Activated naive CD8-positive, alpha-beta T cell treated with anti-CD3 and anti-CD28 coated beads, Interleukin-2, amount 10 ng/mL, durations not matched to agents 7 days and 5 days (primary cell): ENCODE measurements at regions of chr4 and their contacts with region 1.

Region 1: GRCh38 chr4:112284662-112285411 is 867 bp downstream of the TIFA start:
- DNase-seq: no peak
- ATAC-seq: no peak
- H3K4me3 Mint-ChIP-seq: peak overlapping the region; percentile 92
- H3K27ac Mint-ChIP-seq: peak overlapping the region; percentile 94
- H3K4me1 Mint-ChIP-seq: peaks cover 57% of the 10 kb centered on the region
- H3K27me3 Mint-ChIP-seq: no peaks in the 10 kb centered on the region

Region 2: DNA sequence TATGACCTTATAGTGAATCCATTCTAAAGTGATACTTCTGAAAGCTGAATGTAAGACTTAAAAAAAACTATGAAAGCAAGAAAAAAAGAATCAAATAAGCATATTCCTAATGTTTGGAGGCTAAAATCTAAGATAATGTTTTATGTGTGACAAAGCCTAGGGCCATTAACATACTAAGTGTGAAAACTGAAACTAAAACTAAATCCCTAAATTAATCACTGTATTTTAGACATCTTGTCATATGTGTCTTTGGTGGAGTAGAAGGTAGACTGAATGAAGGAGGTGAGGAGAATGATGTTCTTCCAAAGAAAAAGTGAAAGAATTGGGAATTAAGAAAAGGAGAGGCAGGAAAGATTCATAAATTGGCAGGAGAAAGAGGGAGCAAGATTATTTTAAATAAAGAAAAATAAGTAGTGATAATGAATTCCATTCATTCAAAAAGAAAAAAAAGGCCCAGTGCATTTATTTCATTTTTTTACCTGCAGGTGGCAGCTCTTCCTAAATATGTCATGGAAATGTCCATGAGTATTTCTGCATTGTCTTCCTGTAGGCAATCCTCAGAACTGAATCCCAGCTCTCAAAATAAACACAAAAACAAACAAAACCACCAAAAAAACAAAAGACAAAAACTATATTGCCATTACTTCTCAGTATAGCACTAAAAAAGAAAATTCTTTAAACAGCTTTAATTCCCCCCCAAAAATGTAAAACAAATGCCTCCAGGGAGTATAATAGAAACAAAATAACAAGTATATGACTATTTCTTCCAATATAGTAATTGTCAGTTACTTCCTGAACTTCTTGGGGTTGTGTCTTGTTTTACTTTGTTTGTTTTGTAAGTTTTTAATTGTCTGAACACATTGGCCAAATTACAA is 70.2 kb before region 1 on chr4:
- POLR2A ChIA-PET with region 1: no interaction called
- DNase-seq: no peak
- ATAC-seq: no peak
- H3K4me3 Mint-ChIP-seq: peak overlapping the region; percentile 12
- H3K27ac Mint-ChIP-seq: no peak overlapping the region
- H3K4me1 Mint-ChIP-seq: peaks cover 3% of the 10 kb centered on the region
- H3K27me3 Mint-ChIP-seq: no peaks in the 10 kb centered on the region

Region 3: GRCh38 chr4:112296949-112297880 is 12.4 kb after region 1 on chr4 and contains the start of gene ALPK1:
- POLR2A ChIA-PET with region 1: interaction called, 25 read pairs
- DNase-seq: no peak
- ATAC-seq: peak; percentile 80
- H3K4me3 Mint-ChIP-seq: peak within 1 kb of the TSS; percentile 90
- H3K27ac Mint-ChIP-seq: peak within 1 kb of the TSS; percentile 85
- H3K4me1 Mint-ChIP-seq: peaks cover 15% of the 10 kb centered on the region
- H3K27me3 Mint-ChIP-seq: no peaks in the 10 kb centered on the region
- total RNA-seq, gene ALPK1: 20.9 to 26.0 TPM

Region 4: DNA sequence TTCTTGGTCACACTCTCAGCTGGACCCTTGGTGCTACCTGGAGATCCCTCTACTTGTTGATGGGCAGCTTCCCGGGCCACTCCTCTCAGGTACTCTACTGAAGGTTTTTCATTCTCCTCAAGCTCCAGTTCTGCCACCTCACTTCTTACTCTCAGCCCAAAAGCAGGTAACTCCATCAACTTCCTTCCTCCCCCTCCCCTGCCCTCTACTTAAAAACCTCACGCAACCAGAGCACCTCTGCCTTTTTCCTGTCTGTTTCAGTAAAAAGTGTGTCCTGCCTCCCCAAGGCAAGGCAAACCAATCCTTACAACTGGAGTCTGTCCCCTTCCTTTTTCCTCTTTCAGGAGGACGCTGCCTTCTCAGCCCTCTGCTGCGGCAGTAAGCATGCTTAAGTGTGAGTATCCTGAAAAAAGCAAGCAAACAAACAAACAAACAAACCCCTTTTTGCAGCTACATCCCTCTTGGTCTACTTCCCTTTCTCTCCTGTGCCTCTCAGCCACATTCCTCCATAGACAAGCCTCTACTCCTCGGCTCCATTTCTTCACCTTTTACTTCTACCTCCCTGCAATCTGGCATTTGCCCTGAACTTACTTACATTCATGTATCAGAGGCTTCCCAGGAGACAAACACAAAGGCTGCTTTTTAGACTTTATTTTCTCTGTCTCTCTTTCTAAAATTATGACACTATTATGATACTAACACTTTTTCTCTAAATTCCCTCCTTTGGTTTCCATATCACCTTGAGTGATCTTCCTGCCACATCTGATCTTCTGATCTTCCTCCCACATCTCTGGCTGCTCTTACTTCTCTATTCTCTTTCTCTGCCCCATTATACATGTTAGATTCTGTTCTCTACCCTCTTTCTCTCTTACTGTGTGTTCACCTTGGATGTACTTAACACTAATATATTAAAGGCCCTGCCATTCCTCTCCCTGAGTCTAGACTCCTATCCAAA is 17.8 kb after region 1 on chr4:
- POLR2A ChIA-PET with region 1: interaction called, 25 read pairs
- DNase-seq: no peak
- ATAC-seq: peak; percentile 85
- H3K4me3 Mint-ChIP-seq: no peak overlapping the region
- H3K27ac Mint-ChIP-seq: no peak overlapping the region
- H3K4me1 Mint-ChIP-seq: peaks cover 16% of the 10 kb centered on the region
- H3K27me3 Mint-ChIP-seq: no peaks in the 10 kb centered on the region

Region 5: DNA sequence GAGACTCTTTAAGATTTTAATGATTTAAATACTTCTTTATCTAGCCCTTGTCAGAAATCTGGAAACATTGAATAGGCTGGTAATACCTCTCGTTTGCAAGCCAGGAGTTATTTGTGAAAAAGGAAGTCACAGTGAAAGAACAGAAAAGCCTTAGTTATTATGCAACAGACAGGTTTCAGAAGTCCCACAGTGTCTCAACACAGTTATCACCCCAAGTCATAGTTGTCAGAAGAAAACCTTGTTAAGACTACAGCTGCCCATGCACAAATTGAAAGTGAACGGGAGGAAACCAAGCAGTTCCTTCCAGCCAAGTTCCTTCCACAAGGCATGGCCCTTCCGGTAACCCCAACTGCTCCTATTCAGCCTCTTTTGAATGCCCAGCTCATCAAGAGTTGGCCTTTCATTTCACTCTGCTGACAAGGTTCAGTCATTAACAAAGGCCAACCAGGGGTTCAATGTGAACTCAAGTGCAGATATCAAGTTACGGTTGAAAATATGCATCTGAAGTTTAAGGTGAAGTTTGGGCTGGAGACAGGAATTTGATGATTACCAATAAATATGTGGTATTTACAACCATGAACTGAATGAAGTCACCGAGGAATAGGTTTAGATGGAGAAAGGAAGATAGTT is 27.9 kb after region 1 on chr4:
- POLR2A ChIA-PET with region 1: interaction called, 15 read pairs
- DNase-seq: no peak
- ATAC-seq: no peak
- H3K4me3 Mint-ChIP-seq: no peak overlapping the region
- H3K27ac Mint-ChIP-seq: no peak overlapping the region
- H3K4me1 Mint-ChIP-seq: peaks cover 23% of the 10 kb centered on the region
- H3K27me3 Mint-ChIP-seq: no peaks in the 10 kb centered on the region

Region 6: GRCh38 chr4:112325530-112325929 is 40.7 kb after region 1 on chr4:
- POLR2A ChIA-PET with region 1: no interaction called
- DNase-seq: no peak
- ATAC-seq: no peak
- H3K4me3 Mint-ChIP-seq: no peak overlapping the region
- H3K27ac Mint-ChIP-seq: no peak overlapping the region
- H3K4me1 Mint-ChIP-seq: peaks cover 13% of the 10 kb centered on the region
- H3K27me3 Mint-ChIP-seq: no peaks in the 10 kb centered on the region

Region 7: GRCh38 chr4:112515304-112516067 is 230.6 kb after region 1 on chr4:
- POLR2A ChIA-PET with region 1: interaction called, 16 read pairs
- DNase-seq: peak; percentile 70
- ATAC-seq: peak; percentile 61
- H3K4me3 Mint-ChIP-seq: peak overlapping the region; percentile 94
- H3K27ac Mint-ChIP-seq: peak overlapping the region; percentile 82
- H3K4me1 Mint-ChIP-seq: peaks cover 47% of the 10 kb centered on the region
- H3K27me3 Mint-ChIP-seq: peaks cover 85% of the 10 kb centered on the region